Kidney (tissue), 22 donors: ENCODE measurements at regions of chr5 and their contacts with region 1.

Region 1: GRCh38 chr5:178732281-178732680 is 1.8 kb upstream of the ZNF354A start:
- DNase-seq: no peak
- H3K4me3 ChIP-seq: no peak overlapping the region
- H3K27ac ChIP-seq: no peak overlapping the region
- H3K4me1 ChIP-seq: peaks cover 0 to 3% (median 0%) of the 10 kb centered on the region in 3 donors
- H3K27me3 ChIP-seq: no peaks in the 10 kb centered on the region
- CTCF ChIP-seq: no peak

Region 2: DNA sequence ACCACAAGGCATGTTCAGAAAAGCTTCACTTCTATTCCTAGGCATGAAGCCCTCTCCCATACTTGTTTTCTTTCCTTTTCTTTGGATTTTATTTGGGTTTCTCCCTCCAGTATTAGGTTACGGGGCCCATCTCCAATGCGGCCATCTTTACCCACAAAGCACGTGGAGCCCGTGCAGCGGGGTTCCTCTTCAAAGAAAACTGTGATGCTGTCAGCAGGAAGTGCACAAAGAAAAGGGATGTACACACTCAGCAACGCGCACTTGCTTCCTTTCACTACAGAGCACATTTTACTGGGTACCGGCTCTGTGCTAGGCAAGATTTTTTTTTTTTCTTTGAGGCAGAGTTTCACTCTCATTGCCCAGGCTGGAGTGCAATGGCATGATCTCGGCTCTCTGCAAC is 248.7 kb before region 1 on chr5:
- intact Hi-C with region 1: no loop called
- DNase-seq: peak in 1 of 5 donors; percentile 30
- H3K4me3 ChIP-seq: no peak overlapping the region
- H3K27ac ChIP-seq: no peak overlapping the region
- H3K4me1 ChIP-seq: no peaks in the 10 kb centered on the region
- H3K27me3 ChIP-seq: no peaks in the 10 kb centered on the region
- CTCF ChIP-seq: no peak

Region 3: GRCh38 chr5:178859625-178860531 is 127.6 kb after region 1 on chr5 and contains the start of gene ZNF354B:
- intact Hi-C with region 1: loop called (anchors 10 kb)
- DNase-seq: peak; percentile 92 to 97 (median 96)
- H3K4me3 ChIP-seq: peak within 1 kb of the TSS; percentile 21 to 61 (median 44)
- H3K27ac ChIP-seq: peak within 1 kb of the TSS; percentile 77 to 78
- H3K4me1 ChIP-seq: peaks cover 0 to 6% (median 0%) of the 10 kb centered on the region in 3 donors
- H3K27me3 ChIP-seq: no peaks in the 10 kb centered on the region
- CTCF ChIP-seq: peak; percentile 32
- total RNA-seq, gene ZNF354B: 18.3 TPM